ENCODE measurements at regions of chr1 and their contacts with region 1.

Region 1: GRCh38 chr1:35715568-35716002 is 3.1 kb downstream of the C1orf216 start:
- DNase-seq: no peak
- H3K4me3 ChIP-seq: peak overlapping the region in 3 of 4 donors; percentile 0 to 17 (median 2)
- H3K27ac ChIP-seq: no peak overlapping the region
- H3K4me1 ChIP-seq: peaks cover 27 to 50% (median 43%) of the 10 kb centered on the region in 4 donors
- H3K27me3 ChIP-seq: no peaks in the 10 kb centered on the region
- CTCF ChIP-seq: peak; percentile 62 to 81 (median 66)
- EP300 ChIP-seq: no peak
- POLR2A ChIP-seq: no peak

Region 2: GRCh38 chr1:35641233-35641866 is 74.2 kb before region 1 on chr1 and contains the start of gene PSMB2:
- intact Hi-C with region 1: loop called (anchors 5 kb)
- DNase-seq: peak; percentile 99
- H3K4me3 ChIP-seq: peak within 1 kb of the TSS; percentile 83 to 92 (median 86)
- H3K27ac ChIP-seq: peak within 1 kb of the TSS; percentile 89 to 95 (median 92)
- H3K4me1 ChIP-seq: peaks cover 29 to 50% (median 47%) of the 10 kb centered on the region in 4 donors
- H3K27me3 ChIP-seq: peaks cover 0 to 18% (median 0%) of the 10 kb centered on the region in 4 donors
- CTCF ChIP-seq: no peak
- EP300 ChIP-seq: no peak
- POLR2A ChIP-seq: peak; percentile 50
- total RNA-seq, gene PSMB2: 30.3 to 40.5 (median 32.4) TPM

Region 3: GRCh38 chr1:35769188-35769758 is 53.7 kb after region 1 on chr1:
- intact Hi-C with region 1: loop called (anchors 5 kb)
- DNase-seq: peak; percentile 93
- H3K4me3 ChIP-seq: peak overlapping the region; percentile 64 to 89 (median 76)
- H3K27ac ChIP-seq: peak overlapping the region; percentile 75 to 81 (median 80)
- H3K4me1 ChIP-seq: peaks cover 0 to 20% (median 13%) of the 10 kb centered on the region in 4 donors
- H3K27me3 ChIP-seq: no peaks in the 10 kb centered on the region
- CTCF ChIP-seq: peak in 1 of 3 experiments; percentile 4
- EP300 ChIP-seq: no peak
- POLR2A ChIP-seq: no peak

Region 4: DNA sequence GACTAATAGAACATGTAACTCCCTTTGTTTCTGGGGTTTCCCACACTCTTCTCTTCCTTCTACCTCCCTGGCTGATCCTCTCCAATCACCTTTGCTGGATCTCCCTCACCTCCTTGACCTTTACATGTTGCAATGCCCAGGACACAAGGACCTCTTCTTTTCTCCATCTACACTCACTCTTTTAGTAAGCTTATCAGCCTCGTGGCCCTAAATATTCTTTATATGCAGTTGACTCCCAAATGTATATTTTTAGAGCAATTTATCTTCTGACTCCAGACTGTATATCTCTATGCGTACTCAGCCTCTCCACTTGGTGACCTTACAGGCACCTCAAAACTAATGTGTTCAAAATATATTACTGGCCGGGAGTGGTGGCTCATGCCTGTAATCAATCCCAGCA is 72.6 kb after region 1 on chr1:
- intact Hi-C with region 1: no loop called
- DNase-seq: no peak
- H3K4me3 ChIP-seq: no peak overlapping the region
- H3K27ac ChIP-seq: no peak overlapping the region
- H3K4me1 ChIP-seq: no peaks in the 10 kb centered on the region
- H3K27me3 ChIP-seq: no peaks in the 10 kb centered on the region
- CTCF ChIP-seq: no peak
- EP300 ChIP-seq: no peak
- POLR2A ChIP-seq: no peak

Region 5: DNA sequence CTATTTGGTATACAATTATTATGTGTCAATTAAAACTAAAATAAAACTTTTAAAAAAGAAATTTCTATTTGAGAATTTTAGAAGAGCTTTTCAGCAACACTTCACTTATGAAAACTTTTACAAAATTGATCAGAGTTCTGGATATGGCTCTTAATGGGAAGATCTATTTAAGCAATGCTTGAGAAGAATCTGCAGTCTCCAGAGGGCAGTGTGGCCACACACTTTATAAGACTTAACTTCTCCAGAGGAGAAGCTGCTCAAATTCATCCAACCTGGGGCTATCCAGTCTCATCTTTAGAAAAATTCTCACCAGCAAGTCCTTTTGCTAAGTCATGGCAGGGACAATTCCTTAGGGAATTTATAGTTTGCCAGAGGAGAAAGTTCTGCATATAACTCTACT is 142.2 kb after region 1 on chr1:
- intact Hi-C with region 1: no loop called
- DNase-seq: no peak
- H3K4me3 ChIP-seq: no peak overlapping the region
- H3K27ac ChIP-seq: no peak overlapping the region
- H3K4me1 ChIP-seq: no peaks in the 10 kb centered on the region
- H3K27me3 ChIP-seq: no peaks in the 10 kb centered on the region
- CTCF ChIP-seq: no peak
- EP300 ChIP-seq: no peak
- POLR2A ChIP-seq: no peak